ENCODE measurements at regions of chr9 and their contacts with region 1.

Region 1: DNA sequence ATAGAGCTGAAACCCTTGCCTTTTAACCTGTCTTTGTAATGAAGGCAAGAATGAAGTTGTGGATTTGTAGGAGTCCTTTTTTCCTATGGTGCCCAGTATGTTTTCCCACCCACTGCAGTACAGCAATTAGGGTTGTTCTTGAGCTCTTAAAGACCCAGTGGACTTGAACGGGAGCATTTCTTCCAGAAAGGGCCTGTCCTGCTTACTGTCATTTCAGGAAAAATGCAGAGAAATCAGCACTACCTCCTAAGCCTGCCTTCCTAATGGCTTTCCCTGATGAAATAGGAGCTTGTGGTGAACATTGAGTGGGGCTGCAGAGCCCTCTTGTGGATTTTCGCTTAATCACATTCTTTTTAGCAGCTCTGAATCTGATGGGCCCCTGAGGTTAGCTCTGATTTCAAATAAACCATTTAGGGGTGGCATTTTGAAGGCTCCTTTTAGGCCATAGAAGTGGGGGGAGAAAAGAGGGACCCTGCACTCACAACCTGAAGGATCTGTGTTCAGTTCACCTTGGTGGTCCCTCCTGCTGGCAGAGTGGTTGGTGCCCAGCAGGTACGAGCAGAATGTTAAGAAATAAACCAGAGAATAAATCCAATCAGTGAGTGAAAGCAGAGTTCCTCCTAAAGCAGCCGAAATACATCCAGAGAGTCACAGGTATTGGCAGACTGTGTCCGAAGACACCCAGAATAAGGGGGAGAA is 188.0 kb upstream of the KLF9 start:
- DNase-seq: peak; percentile 34
- ATAC-seq: peak; percentile 92
- H3K4me3 ChIP-seq: no peak overlapping the region
- H3K27ac ChIP-seq: no peak overlapping the region
- H3K4me1 ChIP-seq: no peaks in the 10 kb centered on the region
- H3K27me3 ChIP-seq: no peaks in the 10 kb centered on the region; a peak in 1 of 4 replicates
- CTCF ChIP-seq: peak; percentile 56 to 84 (median 84); a peak in 5 of 6 replicates
- EP300 ChIP-seq: no peak
- POLR2A ChIP-seq: no peak
- RAD21 ChIP-seq: peak; percentile 96

Region 2: DNA sequence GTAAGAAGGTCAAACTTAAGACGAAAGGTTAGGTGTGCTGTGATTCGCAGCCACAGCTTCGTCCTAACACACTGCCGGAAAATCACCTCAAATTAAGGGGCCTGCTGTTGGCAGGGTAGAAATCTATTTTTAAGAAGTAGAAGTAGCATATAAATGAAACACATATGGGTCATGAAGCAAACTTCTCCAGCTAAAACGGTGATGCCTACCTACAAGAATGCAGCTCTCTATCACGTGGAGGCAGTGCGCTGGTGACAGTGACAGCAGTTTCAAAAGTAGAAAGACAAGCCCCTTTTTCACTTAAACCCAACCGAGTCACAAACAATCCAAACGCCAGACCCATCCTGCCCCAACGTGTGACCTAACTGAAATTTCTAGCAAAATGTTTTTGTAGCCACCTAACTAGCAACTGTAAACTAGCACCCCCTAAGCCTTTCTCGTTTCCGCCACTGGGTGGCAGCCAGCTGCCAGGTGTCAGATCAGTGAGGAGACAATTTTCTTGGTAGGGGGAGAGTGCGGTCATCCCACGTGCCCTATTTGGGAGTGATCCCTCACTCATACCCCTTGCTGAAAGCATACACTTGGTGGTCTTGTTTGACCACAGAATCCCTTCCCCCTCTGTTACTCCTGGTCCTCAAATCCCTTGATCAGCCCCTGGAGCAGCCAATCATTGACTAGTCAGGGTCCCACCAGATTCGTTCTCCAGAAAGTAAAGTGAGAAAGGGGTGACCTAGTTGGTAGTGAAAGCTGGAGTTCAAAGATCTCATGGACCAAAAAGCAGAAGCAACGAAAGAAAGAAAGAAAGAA is 630.6 kb before region 1 on chr9:
- CTCF ChIA-PET with region 1: interaction called, 11 read pairs
- POLR2A ChIA-PET with region 1: no interaction called
- RAD21 ChIA-PET with region 1: interaction called, 7 read pairs
- SMC1A ChIA-PET with region 1: interaction called, 8 read pairs
- in situ Hi-C with region 1: loop called (anchors 5 kb)
- intact Hi-C with region 1: loop called (anchors 1 kb)
- DNase-seq: no peak
- ATAC-seq: peak; percentile 88
- H3K4me3 ChIP-seq: no peak overlapping the region
- H3K27ac ChIP-seq: no peak overlapping the region
- H3K4me1 ChIP-seq: no peaks in the 10 kb centered on the region
- H3K27me3 ChIP-seq: peaks cover 0 to 2% of the 10 kb centered on the region in 2 experiments; a peak in 2 of 4 replicates
- CTCF ChIP-seq: peak; percentile 82 to 89 (median 88)
- EP300 ChIP-seq: no peak
- POLR2A ChIP-seq: no peak
- RAD21 ChIP-seq: peak; percentile 85

Region 3: GRCh38 chr9:70340572-70340971 is 261.9 kb before region 1 on chr9:
- CTCF ChIA-PET with region 1: interaction called, 75 read pairs
- POLR2A ChIA-PET with region 1: no interaction called
- RAD21 ChIA-PET with region 1: interaction called, 38 read pairs
- SMC1A ChIA-PET with region 1: interaction called, 54 read pairs
- in situ Hi-C with region 1: no loop called
- intact Hi-C with region 1: loop called (anchors 1 kb)
- DNase-seq: no peak
- ATAC-seq: no peak
- H3K4me3 ChIP-seq: no peak overlapping the region
- H3K27ac ChIP-seq: no peak overlapping the region
- H3K4me1 ChIP-seq: no peaks in the 10 kb centered on the region
- H3K27me3 ChIP-seq: no peaks in the 10 kb centered on the region
- CTCF ChIP-seq: peak in 1 of 3 experiments; percentile 33; a peak in 2 of 6 replicates
- EP300 ChIP-seq: no peak
- POLR2A ChIP-seq: no peak
- RAD21 ChIP-seq: peak; percentile 45

Region 4: DNA sequence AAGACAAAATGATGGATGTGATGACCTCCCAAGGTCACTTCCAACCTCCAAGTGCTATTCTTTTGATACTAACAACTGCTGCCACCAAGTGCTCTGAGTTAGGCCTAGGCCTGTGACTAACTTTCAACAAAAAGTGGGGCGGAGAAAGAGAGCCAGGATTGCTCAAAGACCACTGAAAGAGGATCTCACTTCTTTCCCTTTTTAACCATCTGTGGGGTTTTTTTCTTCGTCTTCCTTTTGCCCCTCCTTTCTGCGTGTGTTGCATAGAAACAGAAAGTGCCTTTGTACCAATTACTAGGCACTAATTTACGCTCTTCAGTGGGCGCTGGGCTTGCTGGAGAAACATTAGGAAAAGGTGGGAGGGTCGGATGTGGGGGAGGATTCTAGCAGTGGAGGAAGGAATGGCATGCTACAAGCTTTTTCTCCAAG is 196.0 kb before region 1 on chr9:
- CTCF ChIA-PET with region 1: interaction called, 9 read pairs
- POLR2A ChIA-PET with region 1: no interaction called
- RAD21 ChIA-PET with region 1: interaction called, 7 read pairs
- SMC1A ChIA-PET with region 1: interaction called, 12 read pairs
- in situ Hi-C with region 1: no loop called
- intact Hi-C with region 1: loop called (anchors 5 kb)
- DNase-seq: no peak
- ATAC-seq: peak; percentile 80
- H3K4me3 ChIP-seq: no peak overlapping the region
- H3K27ac ChIP-seq: peak overlapping the region; percentile 48
- H3K4me1 ChIP-seq: peaks cover 13% of the 10 kb centered on the region
- H3K27me3 ChIP-seq: no peaks in the 10 kb centered on the region
- CTCF ChIP-seq: 0 out of 6 replicates have a peak, but pooled peaks of 1 of the 3 experiments have one; percentile 7
- EP300 ChIP-seq: no peak
- POLR2A ChIP-seq: no peak
- RAD21 ChIP-seq: peak; percentile 37

Region 5: DNA sequence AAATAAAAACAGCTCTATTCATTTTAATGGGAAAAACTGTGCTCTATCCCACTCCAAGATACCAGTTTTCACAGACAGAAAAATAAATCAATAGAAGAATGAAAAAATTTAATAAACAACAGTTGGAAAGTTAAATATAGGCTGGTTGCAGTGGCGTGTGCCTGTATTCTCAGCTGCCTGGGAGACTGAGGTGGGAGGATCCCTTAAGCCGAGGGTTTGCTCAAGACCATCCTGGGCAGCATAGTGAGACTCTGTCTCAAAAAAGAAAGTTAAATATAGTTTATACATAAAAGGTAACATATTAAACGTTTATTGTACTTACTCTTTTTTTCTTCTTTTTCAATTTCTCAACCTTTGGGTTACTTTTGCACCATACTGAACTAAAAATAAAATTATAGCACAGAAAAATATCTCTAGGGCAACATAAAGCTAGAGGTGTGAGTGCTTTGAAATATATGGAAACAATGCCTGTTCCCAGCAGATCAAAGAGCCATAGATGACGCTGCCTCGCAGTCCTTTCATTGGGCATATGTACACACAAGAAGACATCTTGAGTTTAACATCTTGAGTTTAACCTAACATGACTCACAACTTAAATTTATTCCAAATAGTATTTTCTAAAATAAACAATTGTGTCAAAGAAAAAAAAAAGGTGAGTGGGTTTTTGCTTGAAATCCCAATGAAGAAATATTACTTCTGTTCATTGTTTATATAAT is 162.3 kb before region 1 on chr9:
- CTCF ChIA-PET with region 1: no interaction called
- POLR2A ChIA-PET with region 1: no interaction called
- RAD21 ChIA-PET with region 1: no interaction called
- SMC1A ChIA-PET with region 1: interaction called, 4 read pairs
- in situ Hi-C with region 1: loop called (anchors 10 kb)
- intact Hi-C with region 1: no loop called
- DNase-seq: no peak
- ATAC-seq: no peak
- H3K4me3 ChIP-seq: no peak overlapping the region
- H3K27ac ChIP-seq: no peak overlapping the region
- H3K4me1 ChIP-seq: no peaks in the 10 kb centered on the region
- H3K27me3 ChIP-seq: no peaks in the 10 kb centered on the region
- CTCF ChIP-seq: no peak
- EP300 ChIP-seq: no peak
- POLR2A ChIP-seq: no peak
- RAD21 ChIP-seq: no peak

Region 6: DNA sequence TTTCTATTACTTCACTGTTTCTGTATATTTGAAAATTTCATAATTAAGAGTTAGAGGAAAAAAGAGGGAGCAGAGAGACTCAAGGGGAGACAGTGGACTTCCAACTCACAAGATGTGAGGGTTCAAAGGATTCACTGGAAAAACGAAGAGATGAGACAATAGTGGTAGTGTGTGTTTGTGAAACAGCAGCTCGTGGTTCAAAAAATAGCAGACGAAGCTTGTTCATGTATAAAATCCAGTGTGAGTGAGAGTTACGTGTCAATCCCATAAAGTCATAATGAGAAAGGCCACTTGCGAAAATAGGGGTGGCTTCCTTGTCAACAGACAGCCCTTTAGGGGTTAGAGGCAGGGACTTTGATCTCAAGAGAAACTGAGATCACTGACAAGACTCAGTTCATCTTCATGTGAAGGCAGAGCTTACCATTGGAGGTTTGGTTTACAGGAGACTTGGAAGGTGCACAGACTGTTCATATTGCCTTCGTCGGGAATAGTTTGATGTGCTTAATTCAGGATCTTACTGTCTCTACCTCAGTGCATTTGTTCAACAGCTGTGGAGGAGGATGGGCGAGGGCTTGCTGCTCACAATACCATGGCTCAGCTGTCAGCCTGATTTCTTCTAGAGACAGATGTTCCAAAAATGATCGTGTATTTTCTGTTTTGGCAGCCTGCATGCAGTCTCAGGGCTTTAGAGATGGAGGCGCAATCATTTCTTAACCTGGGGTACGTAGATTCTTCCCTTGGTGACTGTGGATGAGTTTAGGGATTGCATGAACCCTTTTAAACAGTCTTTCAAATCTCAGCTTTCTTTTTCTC is 82.4 kb before region 1 on chr9:
- CTCF ChIA-PET with region 1: interaction called, 15 read pairs
- POLR2A ChIA-PET with region 1: no interaction called
- RAD21 ChIA-PET with region 1: interaction called, 3 read pairs
- SMC1A ChIA-PET with region 1: interaction called, 13 read pairs
- in situ Hi-C with region 1: no loop called
- intact Hi-C with region 1: no loop called
- DNase-seq: peak; percentile 51
- ATAC-seq: peak; percentile 89
- H3K4me3 ChIP-seq: peak overlapping the region; percentile 26; the same call in 1 of the 2 replicates
- H3K27ac ChIP-seq: peak overlapping the region; percentile 26; the same call in 1 of the 2 replicates
- H3K4me1 ChIP-seq: no peaks in the 10 kb centered on the region
- H3K27me3 ChIP-seq: no peaks in the 10 kb centered on the region
- CTCF ChIP-seq: no peak
- EP300 ChIP-seq: peak in 1 of 2 experiments; percentile 73; a peak in 1 of 4 replicates
- POLR2A ChIP-seq: no peak
- RAD21 ChIP-seq: no peak

Measured in GM12878 (cell line).